MCF 10A (cell line): ENCODE measurements at regions of chr15 and their contacts with region 1.

Region 1: DNA sequence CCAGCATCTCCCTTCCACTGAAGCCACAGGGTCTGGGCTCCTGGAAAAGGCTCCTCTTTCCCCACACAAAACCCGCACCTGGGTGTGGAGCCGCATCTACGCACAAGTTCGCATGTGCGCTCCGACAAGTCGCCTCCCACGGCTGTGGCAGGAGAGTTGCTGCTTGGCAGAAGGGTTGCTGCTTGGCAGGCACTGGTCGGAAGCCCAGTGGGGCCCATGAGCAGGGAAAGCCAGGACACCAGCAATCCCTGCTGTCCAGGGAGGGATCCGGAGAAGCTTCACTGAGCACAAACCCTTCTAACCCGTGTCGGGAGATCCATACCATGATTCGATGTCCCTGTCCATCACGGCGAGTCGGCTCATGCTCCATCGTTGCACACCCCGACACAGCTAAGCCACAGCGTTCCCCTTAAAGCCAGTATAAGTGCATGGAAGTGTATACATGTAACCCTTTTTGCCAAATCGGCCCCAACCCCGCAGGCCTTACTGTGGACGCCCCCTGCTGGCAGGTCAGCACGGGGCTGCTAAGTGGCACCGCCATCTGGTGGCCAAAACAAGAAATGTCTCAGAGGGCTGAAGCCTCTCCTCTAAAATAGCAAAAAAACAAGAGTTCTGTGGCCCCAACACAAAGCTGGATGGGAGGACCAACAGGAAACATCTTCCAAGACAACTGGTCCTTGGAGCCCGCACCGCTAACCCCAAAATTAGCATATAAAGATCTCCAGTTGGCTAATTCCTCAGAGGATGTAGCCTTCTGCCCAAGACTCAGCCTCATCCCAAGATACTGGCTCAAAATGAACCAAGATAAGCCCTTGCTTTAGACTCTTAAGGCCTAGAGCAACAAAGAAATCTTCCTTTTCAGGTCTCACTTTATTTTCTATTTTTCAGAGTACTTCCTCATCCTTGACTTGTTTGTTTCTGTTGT is 8.3 kb downstream of the ANKRD63 start:
- DNase-seq: peak; percentile 80
- H3K4me3 Mint-ChIP-seq: no peak overlapping the region
- H3K27ac Mint-ChIP-seq: no peak overlapping the region
- H3K4me1 Mint-ChIP-seq: no peaks in the 10 kb centered on the region
- H3K27me3 Mint-ChIP-seq: no peaks in the 10 kb centered on the region
- CTCF ChIP-seq: peak; percentile 100

Region 2: DNA sequence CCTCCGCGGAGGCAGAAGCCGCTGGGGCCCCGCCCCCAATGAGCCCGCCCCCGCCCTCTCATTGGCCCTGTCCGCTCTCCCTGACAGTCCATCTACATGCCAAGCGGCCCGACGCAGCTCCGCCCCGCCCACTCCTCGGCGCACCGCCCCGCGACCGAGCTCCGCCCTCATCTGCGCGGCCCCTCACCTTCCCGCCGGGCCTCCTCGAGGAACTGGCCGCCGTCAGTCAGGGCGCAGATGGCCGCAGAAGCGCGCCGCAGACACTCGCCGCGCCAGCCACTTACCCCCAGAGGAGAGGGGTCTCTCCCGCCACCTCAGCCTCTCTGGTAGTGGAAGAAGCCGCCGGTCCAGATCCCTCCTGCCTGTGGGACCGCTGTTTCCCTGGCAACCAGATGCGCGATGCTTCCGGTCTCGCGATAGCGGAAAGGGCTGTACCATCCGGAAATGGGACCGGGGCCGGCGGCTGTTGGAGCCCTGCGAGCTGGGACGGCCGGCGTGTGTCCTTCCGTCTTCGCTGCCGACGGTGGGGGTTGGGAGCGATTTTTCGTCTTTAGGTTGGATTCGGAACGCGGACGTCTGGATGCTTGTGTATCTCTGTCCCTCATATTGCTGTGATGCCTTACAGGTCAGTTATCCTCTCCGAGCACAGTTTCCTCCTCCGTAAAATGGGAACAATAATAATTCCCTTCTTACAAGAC is 492.0 kb before region 1 on chr15 and contains the start of gene FSIP1:
- CTCF ChIA-PET with region 1: interaction called, 3 read pairs
- POLR2A ChIA-PET with region 1: no interaction called
- intact Hi-C with region 1: loop called (anchors 10 kb)
- DNase-seq: peak; percentile 96
- H3K4me3 Mint-ChIP-seq: peak within 1 kb of the TSS; percentile 91
- H3K27ac Mint-ChIP-seq: peak within 1 kb of the TSS; percentile 1
- H3K4me1 Mint-ChIP-seq: peaks cover 15% of the 10 kb centered on the region
- H3K27me3 Mint-ChIP-seq: no peaks in the 10 kb centered on the region
- CTCF ChIP-seq: no peak
- total RNA-seq, gene FSIP1: 2.2 and 3.2 TPM in 2 replicates

Region 3: DNA sequence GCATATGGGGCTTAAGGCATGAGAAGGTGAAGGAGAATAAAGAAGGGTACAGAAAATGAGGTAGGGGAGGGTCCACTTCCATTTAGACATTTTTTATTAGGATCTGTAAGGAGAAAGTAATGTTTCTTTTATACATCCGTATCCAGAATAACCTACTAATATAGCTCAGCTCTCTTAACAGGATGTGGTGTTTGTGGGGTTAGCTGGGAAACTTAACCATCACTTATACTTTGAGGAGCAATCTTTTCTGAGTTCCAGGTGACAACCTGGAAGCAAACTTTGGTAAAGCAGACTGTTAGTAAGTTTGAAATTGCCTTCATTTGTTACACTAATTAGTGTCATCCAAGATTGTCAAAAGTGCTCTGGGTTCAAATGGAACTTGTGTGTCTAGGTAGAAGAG is 77.2 kb before region 1 on chr15:
- CTCF ChIA-PET with region 1: interaction called, 26 read pairs
- POLR2A ChIA-PET with region 1: no interaction called
- intact Hi-C with region 1: no loop called
- DNase-seq: no peak
- H3K4me3 Mint-ChIP-seq: no peak overlapping the region
- H3K27ac Mint-ChIP-seq: no peak overlapping the region
- H3K4me1 Mint-ChIP-seq: peaks cover 3% of the 10 kb centered on the region
- H3K27me3 Mint-ChIP-seq: no peaks in the 10 kb centered on the region
- CTCF ChIP-seq: no peak

Region 4: GRCh38 chr15:40238532-40239403 is 35.8 kb before region 1 on chr15 and contains the start of gene PAK6:
- CTCF ChIA-PET with region 1: interaction called, 127 read pairs
- POLR2A ChIA-PET with region 1: interaction called, 42 read pairs
- intact Hi-C with region 1: loop called (anchors 1 kb)
- DNase-seq: peak; percentile 95
- H3K4me3 Mint-ChIP-seq: peak within 1 kb of the TSS; percentile 73
- H3K27ac Mint-ChIP-seq: peak within 1 kb of the TSS; percentile 67
- H3K4me1 Mint-ChIP-seq: peaks cover 50% of the 10 kb centered on the region
- H3K27me3 Mint-ChIP-seq: no peaks in the 10 kb centered on the region
- CTCF ChIP-seq: no peak
- total RNA-seq, gene PAK6: 9.3 and 9.5 TPM in 2 replicates

Region 5: DNA sequence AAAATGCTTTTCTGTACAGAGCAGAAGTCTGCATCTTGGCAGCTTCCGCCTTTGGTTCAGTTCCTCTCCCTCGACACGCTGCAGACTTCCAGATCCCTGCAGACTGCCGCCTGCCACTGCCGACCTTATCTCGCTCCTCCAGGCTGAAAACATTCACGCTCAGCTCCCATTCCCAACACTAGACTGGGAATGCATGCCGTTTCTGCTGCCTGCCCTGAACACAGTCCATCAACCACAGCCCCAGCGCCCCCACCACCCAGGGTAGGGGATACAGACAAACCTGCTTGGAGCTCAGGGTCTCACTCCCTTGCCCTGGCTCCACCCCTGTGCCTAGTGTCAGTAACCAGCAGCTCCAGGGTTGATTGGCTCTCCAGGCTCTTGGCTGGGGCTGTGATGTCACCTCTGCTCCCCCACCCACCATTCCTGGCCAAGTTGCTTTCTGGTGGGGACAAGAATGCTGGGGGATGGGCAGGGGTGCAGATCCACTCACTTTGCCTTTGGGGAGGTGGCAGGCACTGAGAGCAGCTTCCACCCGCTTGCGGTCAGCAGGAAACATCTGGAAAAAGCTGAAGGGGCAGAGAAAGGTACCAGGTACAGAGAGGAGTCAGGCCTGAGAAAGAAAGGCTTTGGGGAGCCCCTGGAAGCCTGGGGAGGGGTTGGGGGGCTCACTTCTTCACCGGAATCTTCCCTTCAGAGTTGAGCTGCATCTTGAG is 27.0 kb after region 1 on chr15:
- CTCF ChIA-PET with region 1: interaction called, 137 read pairs
- POLR2A ChIA-PET with region 1: no interaction called
- intact Hi-C with region 1: no loop called
- DNase-seq: no peak
- H3K4me3 Mint-ChIP-seq: no peak overlapping the region
- H3K27ac Mint-ChIP-seq: no peak overlapping the region
- H3K4me1 Mint-ChIP-seq: no peaks in the 10 kb centered on the region
- H3K27me3 Mint-ChIP-seq: peaks cover 16% of the 10 kb centered on the region
- CTCF ChIP-seq: no peak

Region 6: GRCh38 chr15:40338041-40338657 is 63.5 kb after region 1 on chr15:
- CTCF ChIA-PET with region 1: interaction called, 179 read pairs
- POLR2A ChIA-PET with region 1: interaction called, 8 read pairs
- intact Hi-C with region 1: loop called (anchors 1 kb)
- DNase-seq: peak; percentile 68
- H3K4me3 Mint-ChIP-seq: peak overlapping the region; percentile 79
- H3K27ac Mint-ChIP-seq: peak overlapping the region; percentile 79
- H3K4me1 Mint-ChIP-seq: peaks cover 38% of the 10 kb centered on the region
- H3K27me3 Mint-ChIP-seq: no peaks in the 10 kb centered on the region
- CTCF ChIP-seq: peak; percentile 76

Region 7: DNA sequence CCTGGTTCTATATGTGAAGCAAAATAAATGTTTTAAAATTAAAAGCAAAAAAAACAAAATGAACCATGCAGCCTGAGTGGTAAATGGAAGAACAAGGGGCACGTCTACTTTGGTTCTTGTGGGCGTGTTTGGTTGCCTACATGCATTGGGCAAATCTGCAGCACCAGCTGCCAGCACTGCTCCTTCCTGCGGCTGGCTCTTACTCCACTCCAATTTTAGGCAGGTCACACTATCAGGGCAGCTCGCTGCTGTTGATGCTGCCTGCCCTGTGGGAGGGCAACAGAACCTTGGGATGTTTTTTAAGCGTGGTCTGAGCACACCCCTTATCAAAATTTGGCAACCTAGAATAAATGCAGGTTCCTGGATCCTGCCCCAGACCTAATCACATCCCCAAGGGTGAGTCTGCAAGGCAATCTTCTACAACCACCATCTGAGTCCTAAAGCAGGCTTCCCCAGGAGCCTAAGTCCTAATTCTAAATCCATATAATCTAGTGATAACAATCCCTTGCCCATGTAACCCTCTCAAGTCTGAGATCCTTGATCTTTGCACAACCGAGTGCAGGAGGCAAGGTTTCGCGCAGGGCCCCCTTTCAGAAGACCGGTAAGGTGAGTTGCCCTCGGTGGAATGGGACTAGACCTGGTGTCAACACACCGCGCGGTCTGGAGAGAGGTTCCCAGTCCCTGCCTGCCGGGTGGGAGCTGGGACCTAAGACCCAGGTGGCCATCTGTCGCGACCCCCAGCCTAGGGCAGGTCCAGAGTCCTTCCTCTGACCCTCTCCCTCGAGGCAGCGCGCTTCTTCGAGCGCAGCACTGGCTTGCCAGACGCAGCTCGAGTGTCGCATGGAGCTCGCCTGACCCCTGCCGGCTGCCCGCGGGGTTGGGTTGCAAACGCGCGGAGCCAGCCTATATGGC is 146.9 kb after region 1 on chr15:
- CTCF ChIA-PET with region 1: interaction called, 107 read pairs
- POLR2A ChIA-PET with region 1: interaction called, 11 read pairs
- intact Hi-C with region 1: no loop called
- DNase-seq: peak; percentile 68
- H3K4me3 Mint-ChIP-seq: peak overlapping the region; percentile 14
- H3K27ac Mint-ChIP-seq: peak overlapping the region; percentile 73
- H3K4me1 Mint-ChIP-seq: peaks cover 19% of the 10 kb centered on the region
- H3K27me3 Mint-ChIP-seq: no peaks in the 10 kb centered on the region
- CTCF ChIP-seq: peak; percentile 92

Region 8: DNA sequence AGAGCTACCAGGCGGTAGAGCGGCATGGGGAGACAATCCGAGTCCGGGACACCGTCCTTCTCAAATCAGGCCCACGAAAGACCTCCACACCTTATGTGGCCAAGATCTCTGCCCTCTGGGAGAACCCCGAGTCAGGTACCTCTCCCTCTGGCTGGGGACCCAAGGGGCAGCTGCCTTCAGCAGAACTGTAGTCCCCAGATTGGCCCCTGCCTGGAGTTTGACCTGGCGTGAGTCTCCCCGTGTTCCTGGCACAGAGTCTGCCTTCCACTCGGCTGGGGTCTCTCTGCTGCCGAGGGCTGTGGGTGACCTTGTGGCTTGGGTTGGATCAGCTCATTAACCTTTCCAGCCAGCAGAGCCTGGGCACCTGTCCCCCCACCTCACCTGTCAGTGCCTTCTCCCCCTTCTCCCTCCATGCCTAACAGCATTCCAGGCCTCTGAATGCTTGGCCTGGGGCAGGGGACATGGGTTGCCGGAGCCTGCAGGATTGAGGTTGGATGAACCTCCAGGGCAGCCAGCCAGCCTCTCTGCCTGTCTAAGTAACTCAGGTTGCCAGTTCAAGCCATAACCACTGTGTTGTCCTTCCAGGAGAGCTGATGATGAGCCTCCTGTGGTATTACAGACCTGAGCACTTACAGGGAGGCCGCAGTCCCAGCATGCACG is 189.4 kb after region 1 on chr15:
- CTCF ChIA-PET with region 1: no interaction called
- POLR2A ChIA-PET with region 1: no interaction called
- intact Hi-C with region 1: no loop called
- DNase-seq: no peak
- H3K4me3 Mint-ChIP-seq: no peak overlapping the region
- H3K27ac Mint-ChIP-seq: no peak overlapping the region
- H3K4me1 Mint-ChIP-seq: no peaks in the 10 kb centered on the region
- H3K27me3 Mint-ChIP-seq: no peaks in the 10 kb centered on the region
- CTCF ChIP-seq: no peak

Region 9: GRCh38 chr15:40906091-40906990 is 631.7 kb after region 1 on chr15:
- CTCF ChIA-PET with region 1: no interaction called
- POLR2A ChIA-PET with region 1: no interaction called
- intact Hi-C with region 1: no loop called
- DNase-seq: peak; percentile 97
- H3K4me3 Mint-ChIP-seq: peak overlapping the region; percentile 10
- H3K27ac Mint-ChIP-seq: peak overlapping the region; percentile 51
- H3K4me1 Mint-ChIP-seq: peaks cover 35% of the 10 kb centered on the region
- H3K27me3 Mint-ChIP-seq: no peaks in the 10 kb centered on the region
- CTCF ChIP-seq: peak; percentile 71

Region 10: GRCh38 chr15:41634072-41634626 is 1359.5 kb after region 1 on chr15:
- CTCF ChIA-PET with region 1: no interaction called
- POLR2A ChIA-PET with region 1: no interaction called
- intact Hi-C with region 1: no loop called
- DNase-seq: no peak
- H3K4me3 Mint-ChIP-seq: no peak overlapping the region
- H3K27ac Mint-ChIP-seq: no peak overlapping the region
- H3K4me1 Mint-ChIP-seq: peaks cover 5% of the 10 kb centered on the region
- H3K27me3 Mint-ChIP-seq: no peaks in the 10 kb centered on the region
- CTCF ChIP-seq: no peak